Testis (tissue), 5 donors: ENCODE measurements at regions of chr1 and their contacts with region 1.

Region 1: GRCh38 chr1:149978547-149979023 is 31.9 kb downstream of the OTUD7B start:
- DNase-seq: no peak
- H3K4me3 ChIP-seq: no peak overlapping the region
- H3K27ac ChIP-seq: no peak overlapping the region
- H3K4me1 ChIP-seq: no peaks in the 10 kb centered on the region
- H3K27me3 ChIP-seq: no peaks in the 10 kb centered on the region
- CTCF ChIP-seq: no peak
- POLR2A ChIP-seq: no peak

Region 2: GRCh38 chr1:150053926-150054325 is 75.3 kb after region 1 on chr1:
- intact Hi-C with region 1: loop called (anchors 10 kb)
- DNase-seq: no peak
- H3K4me3 ChIP-seq: no peak overlapping the region
- H3K27ac ChIP-seq: no peak overlapping the region
- H3K4me1 ChIP-seq: no peaks in the 10 kb centered on the region
- H3K27me3 ChIP-seq: no peaks in the 10 kb centered on the region
- CTCF ChIP-seq: no peak
- POLR2A ChIP-seq: no peak

Region 3: GRCh38 chr1:150109586-150109985 is 131.0 kb after region 1 on chr1:
- intact Hi-C with region 1: no loop called
- DNase-seq: no peak
- H3K4me3 ChIP-seq: no peak overlapping the region
- H3K27ac ChIP-seq: no peak overlapping the region
- H3K4me1 ChIP-seq: no peaks in the 10 kb centered on the region
- H3K27me3 ChIP-seq: no peaks in the 10 kb centered on the region
- CTCF ChIP-seq: no peak
- POLR2A ChIP-seq: no peak